ENCODE measurements at regions of chr19 and their contacts with region 1.

Region 1: GRCh38 chr19:33849551-33850147 is 53.0 kb downstream of the KCTD15 start:
- DNase-seq: no peak
- ATAC-seq: no peak
- H3K4me3 Mint-ChIP-seq: no peak overlapping the region
- H3K27ac Mint-ChIP-seq: no peak overlapping the region
- H3K4me1 Mint-ChIP-seq: no peaks in the 10 kb centered on the region
- H3K27me3 Mint-ChIP-seq: peaks cover 5% of the 10 kb centered on the region
- CTCF ChIP-seq: no peak

Region 2: GRCh38 chr19:33257828-33258227 is 591.8 kb before region 1 on chr19:
- CTCF ChIA-PET with region 1: no interaction called
- POLR2A ChIA-PET with region 1: interaction called, 14 read pairs
- intact Hi-C with region 1: no loop called
- DNase-seq: no peak
- ATAC-seq: no peak
- H3K4me3 Mint-ChIP-seq: no peak overlapping the region
- H3K27ac Mint-ChIP-seq: no peak overlapping the region
- H3K4me1 Mint-ChIP-seq: peaks cover 14% of the 10 kb centered on the region
- H3K27me3 Mint-ChIP-seq: peaks cover 18% of the 10 kb centered on the region
- CTCF ChIP-seq: no peak